ENCODE measurements at regions of chr1 and their contacts with region 1.

Region 1: DNA sequence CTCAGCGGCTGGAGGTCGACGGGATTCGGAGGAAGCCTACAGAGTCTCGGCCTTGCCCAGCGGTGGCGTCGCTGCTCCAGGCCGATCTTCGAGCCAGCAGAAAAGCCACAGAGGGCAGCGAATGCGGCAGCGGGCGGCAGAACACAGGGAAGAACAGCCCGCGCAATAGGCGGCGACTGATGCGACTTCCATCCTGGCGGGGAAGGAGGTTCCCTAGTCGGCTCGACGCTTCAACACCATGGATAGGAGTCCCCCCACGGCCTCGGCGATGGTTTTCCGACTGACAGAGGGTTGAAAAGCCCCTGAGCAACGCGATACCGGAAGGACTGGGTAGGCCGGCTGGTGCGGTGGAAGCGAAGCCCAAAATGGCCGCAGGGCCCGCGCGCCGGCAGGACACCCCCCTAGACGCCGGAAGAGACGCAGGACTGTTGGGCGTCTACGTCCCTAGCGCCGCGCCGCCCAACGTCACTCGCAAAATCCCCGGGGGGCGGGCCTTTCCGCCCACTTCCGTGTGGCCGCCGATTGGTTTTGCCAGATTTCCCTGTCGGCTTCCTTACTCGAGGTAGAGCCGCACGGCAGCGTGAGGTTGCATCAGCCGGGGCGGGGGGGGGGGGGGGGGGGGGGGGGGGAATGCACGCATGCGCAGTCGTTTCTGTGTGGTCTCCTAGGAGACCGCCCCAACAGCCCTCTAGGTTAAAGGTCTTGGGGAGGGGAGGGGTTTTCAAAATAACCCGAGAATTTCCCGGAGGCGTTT is at the start of gene PPP1R15B:
- DNase-seq: peak; percentile 96 to 100
- H3K4me3 ChIP-seq: peak within 1 kb of the TSS; percentile 63 to 97 (median 95)
- H3K27ac ChIP-seq: peak within 1 kb of the TSS; percentile 95
- H3K4me1 ChIP-seq: peaks cover 0 to 2% (median 0%) of the 10 kb centered on the region in 4 experiments; a peak in 3 of 7 replicates
- H3K27me3 ChIP-seq: no peaks in the 10 kb centered on the region
- CTCF ChIP-seq: no peak
- EP300 ChIP-seq: peak; percentile 85 to 88
- POLR2A ChIP-seq: peak; percentile 77 to 95
- RAD21 ChIP-seq: no peak
- total RNA-seq, gene PPP1R15B: 70.1 and 72.2 TPM in 2 replicates

Region 2: GRCh38 chr1:204431310-204432165 is 19.9 kb after region 1 on chr1:
- CTCF ChIA-PET with region 1: interaction called, 54 read pairs
- POLR2A ChIA-PET with region 1: interaction called, 3 read pairs
- DNase-seq: peak; percentile 62 to 96
- H3K4me3 ChIP-seq: no peak overlapping the region
- H3K27ac ChIP-seq: no peak overlapping the region
- H3K4me1 ChIP-seq: 0 out of 7 replicates have a peak, but pooled peaks cover 0 to 2% (median 0%) of the 10 kb centered on the region in 4 experiments
- H3K27me3 ChIP-seq: no peaks in the 10 kb centered on the region
- CTCF ChIP-seq: peak; percentile 84 to 95 (median 91)
- EP300 ChIP-seq: no peak
- POLR2A ChIP-seq: no peak
- RAD21 ChIP-seq: peak; percentile 61 to 68

Region 3: GRCh38 chr1:204506961-204507387 is 95.3 kb after region 1 on chr1:
- CTCF ChIA-PET with region 1: interaction called, 4 read pairs
- POLR2A ChIA-PET with region 1: interaction called, 10 read pairs
- DNase-seq: peak; percentile 71 to 99
- H3K4me3 ChIP-seq: peak overlapping the region; percentile 80 to 90 (median 88)
- H3K27ac ChIP-seq: peak overlapping the region; percentile 82
- H3K4me1 ChIP-seq: peaks cover 0 to 2% (median 0%) of the 10 kb centered on the region in 4 experiments; a peak in 1 of 7 replicates
- H3K27me3 ChIP-seq: no peaks in the 10 kb centered on the region
- CTCF ChIP-seq: no peak
- EP300 ChIP-seq: no peak
- POLR2A ChIP-seq: peak in 1 of 2 experiments; percentile 28; a peak in 2 of 3 replicates
- RAD21 ChIP-seq: no peak

Region 4: DNA sequence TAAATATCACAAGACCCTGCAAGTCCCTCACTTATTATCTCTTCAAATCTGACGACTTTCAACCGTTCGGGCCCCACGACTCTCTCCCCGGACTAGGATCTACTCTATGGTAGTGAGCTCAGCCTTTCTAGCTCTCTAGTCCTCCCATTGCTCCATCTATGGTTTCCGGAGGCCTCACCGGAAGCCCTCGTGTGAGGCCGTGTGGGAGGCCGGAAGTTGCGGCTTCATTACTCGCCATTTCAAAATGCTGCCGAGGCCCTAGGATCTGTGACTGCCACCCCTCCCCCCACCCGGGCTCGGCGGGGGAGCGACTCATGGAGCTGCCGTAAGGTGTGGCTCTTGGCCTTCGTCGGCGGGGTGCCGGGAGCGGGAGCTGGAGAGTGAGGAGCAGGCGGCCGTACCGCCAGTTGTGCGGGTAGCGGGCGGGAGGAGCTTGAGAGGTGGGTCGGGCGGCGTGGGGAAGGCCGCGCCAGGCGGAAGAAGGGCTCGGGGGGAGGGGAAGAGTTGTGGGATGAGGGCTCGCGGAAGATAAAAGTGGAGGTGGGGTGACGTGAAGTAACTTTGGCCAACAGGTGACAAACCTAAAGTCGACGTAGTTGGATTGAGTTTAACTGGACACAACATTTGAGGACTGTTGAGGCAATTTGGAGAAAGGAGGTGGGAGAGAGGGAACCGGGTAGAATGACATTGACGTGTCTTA is 104.7 kb after region 1 on chr1 and contains the start of gene MDM4:
- CTCF ChIA-PET with region 1: no interaction called
- POLR2A ChIA-PET with region 1: interaction called, 11 read pairs
- DNase-seq: peak; percentile 90 to 99
- H3K4me3 ChIP-seq: peak within 1 kb of the TSS; percentile 75 to 91 (median 84)
- H3K27ac ChIP-seq: peak within 1 kb of the TSS; percentile 97
- H3K4me1 ChIP-seq: no peaks in the 10 kb centered on the region; a peak in 1 of 7 replicates
- H3K27me3 ChIP-seq: no peaks in the 10 kb centered on the region
- CTCF ChIP-seq: no peak
- EP300 ChIP-seq: peak in 1 of 2 experiments; percentile 68; a peak in 2 of 3 replicates
- POLR2A ChIP-seq: peak in 1 of 2 experiments; percentile 75; a peak in 1 of 3 replicates
- RAD21 ChIP-seq: no peak
- total RNA-seq, gene MDM4: 81.7 and 84.9 TPM in 2 replicates

Measured in H1 (cell line).